ENCODE measurements at regions of chr5 and their contacts with region 1.

Region 1: GRCh38 chr5:38121420-38121819 is 136.9 kb upstream of the EGFLAM start:
- DNase-seq: no peak
- ATAC-seq: no peak
- H3K4me3 ChIP-seq: no peak overlapping the region
- H3K4me3 Mint-ChIP-seq: no peak overlapping the region
- H3K27ac ChIP-seq: no peak overlapping the region
- H3K27ac Mint-ChIP-seq: no peak overlapping the region
- H3K4me1 ChIP-seq: no peaks in the 10 kb centered on the region
- H3K4me1 Mint-ChIP-seq: no peaks in the 10 kb centered on the region
- H3K27me3 ChIP-seq: no peaks in the 10 kb centered on the region
- H3K27me3 Mint-ChIP-seq: no peaks in the 10 kb centered on the region
- CTCF ChIP-seq: no peak

Region 2: DNA sequence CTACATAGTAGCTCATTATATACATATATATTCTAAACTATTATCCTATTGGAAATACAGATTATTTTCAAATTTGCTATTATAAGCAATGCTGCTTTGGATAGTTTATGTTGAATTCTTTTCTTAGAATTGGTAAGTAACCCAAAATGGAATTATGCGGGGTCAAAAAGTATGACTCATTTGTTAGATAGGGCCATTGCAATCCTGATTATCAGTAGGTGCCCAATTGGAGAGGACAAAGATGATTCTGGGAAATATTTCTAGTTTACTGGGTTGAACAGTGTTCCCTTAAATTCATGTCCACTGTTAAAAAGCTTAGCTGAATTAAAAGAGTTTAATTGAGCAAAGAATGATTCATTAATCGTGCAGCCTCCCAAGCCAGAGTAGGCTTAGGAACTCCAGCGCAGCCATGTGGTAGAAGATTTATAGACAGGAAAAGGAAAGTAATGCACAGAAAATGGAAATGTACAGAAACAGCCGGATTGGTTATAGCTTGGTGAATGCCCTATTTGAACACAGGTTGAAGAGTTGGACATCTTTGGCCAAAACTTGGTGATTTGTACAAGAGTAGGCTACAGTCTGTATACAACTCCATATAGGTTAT is 363.3 kb before region 1 on chr5:
- CTCF ChIA-PET with region 1: no interaction called
- POLR2A ChIA-PET with region 1: no interaction called
- intact Hi-C with region 1: no loop called
- DNase-seq: no peak
- ATAC-seq: no peak
- H3K4me3 ChIP-seq: no peak overlapping the region
- H3K4me3 Mint-ChIP-seq: no peak overlapping the region
- H3K27ac ChIP-seq: no peak overlapping the region
- H3K27ac Mint-ChIP-seq: no peak overlapping the region
- H3K4me1 ChIP-seq: no peaks in the 10 kb centered on the region
- H3K4me1 Mint-ChIP-seq: no peaks in the 10 kb centered on the region
- H3K27me3 ChIP-seq: no peaks in the 10 kb centered on the region
- H3K27me3 Mint-ChIP-seq: no peaks in the 10 kb centered on the region
- CTCF ChIP-seq: no peak

Region 3: GRCh38 chr5:38151878-38152277 is 30.5 kb after region 1 on chr5:
- CTCF ChIA-PET with region 1: no interaction called
- POLR2A ChIA-PET with region 1: no interaction called
- intact Hi-C with region 1: loop called in 1 of 2 experiments (anchors 1 kb)
- DNase-seq: no peak
- ATAC-seq: no peak
- H3K4me3 ChIP-seq: no peak overlapping the region
- H3K4me3 Mint-ChIP-seq: no peak overlapping the region
- H3K27ac ChIP-seq: no peak overlapping the region
- H3K27ac Mint-ChIP-seq: no peak overlapping the region
- H3K4me1 ChIP-seq: no peaks in the 10 kb centered on the region
- H3K4me1 Mint-ChIP-seq: no peaks in the 10 kb centered on the region
- H3K27me3 ChIP-seq: peaks cover 2 to 4% of the 10 kb centered on the region in 2 experiments
- H3K27me3 Mint-ChIP-seq: peaks cover 21% of the 10 kb centered on the region
- CTCF ChIP-seq: no peak